Activated CD4-positive, alpha-beta T cell treated with anti-CD3 and anti-CD28 coated beads for 36 hours (primary cell): ENCODE measurements at regions of chr19 and their contacts with region 1.

Region 1: GRCh38 chr19:32748497-32748896 is 28.9 kb downstream of the TDRD12 start:
- DNase-seq: peak; percentile 18
- ATAC-seq: no peak
- H3K4me3 Mint-ChIP-seq: no peak overlapping the region
- H3K27ac Mint-ChIP-seq: no peak overlapping the region
- H3K4me1 Mint-ChIP-seq: peaks cover 10% of the 10 kb centered on the region
- H3K27me3 Mint-ChIP-seq: peaks cover 19% of the 10 kb centered on the region

Region 2: DNA sequence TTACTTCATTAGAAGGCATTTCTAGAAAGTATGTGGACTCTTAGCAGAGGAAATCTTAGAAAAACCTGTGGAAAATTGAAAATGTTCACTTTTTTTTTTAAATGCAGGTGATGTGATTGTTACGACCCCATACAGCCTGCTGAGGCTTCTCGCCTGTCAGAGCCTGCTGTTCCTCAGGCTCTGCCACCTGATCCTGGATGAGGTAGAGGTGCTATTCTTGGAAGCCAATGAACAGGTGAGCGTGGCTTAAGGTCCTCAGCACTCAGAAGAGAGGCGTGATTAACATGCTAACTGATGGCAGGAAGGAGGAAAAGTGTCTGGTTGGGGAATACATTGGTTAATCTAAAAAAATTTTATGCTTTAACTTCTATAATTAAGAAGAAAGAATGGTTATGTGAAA is 49.7 kb after region 1 on chr19:
- CTCF ChIA-PET with region 1: no interaction called
- POLR2A ChIA-PET with region 1: no interaction called
- intact Hi-C with region 1: loop called in 1 of 2 experiments (anchors 5 kb)
- DNase-seq: no peak
- ATAC-seq: no peak
- H3K4me3 Mint-ChIP-seq: no peak overlapping the region
- H3K27ac Mint-ChIP-seq: no peak overlapping the region
- H3K4me1 Mint-ChIP-seq: peaks cover 41% of the 10 kb centered on the region
- H3K27me3 Mint-ChIP-seq: no peaks in the 10 kb centered on the region

Region 3: DNA sequence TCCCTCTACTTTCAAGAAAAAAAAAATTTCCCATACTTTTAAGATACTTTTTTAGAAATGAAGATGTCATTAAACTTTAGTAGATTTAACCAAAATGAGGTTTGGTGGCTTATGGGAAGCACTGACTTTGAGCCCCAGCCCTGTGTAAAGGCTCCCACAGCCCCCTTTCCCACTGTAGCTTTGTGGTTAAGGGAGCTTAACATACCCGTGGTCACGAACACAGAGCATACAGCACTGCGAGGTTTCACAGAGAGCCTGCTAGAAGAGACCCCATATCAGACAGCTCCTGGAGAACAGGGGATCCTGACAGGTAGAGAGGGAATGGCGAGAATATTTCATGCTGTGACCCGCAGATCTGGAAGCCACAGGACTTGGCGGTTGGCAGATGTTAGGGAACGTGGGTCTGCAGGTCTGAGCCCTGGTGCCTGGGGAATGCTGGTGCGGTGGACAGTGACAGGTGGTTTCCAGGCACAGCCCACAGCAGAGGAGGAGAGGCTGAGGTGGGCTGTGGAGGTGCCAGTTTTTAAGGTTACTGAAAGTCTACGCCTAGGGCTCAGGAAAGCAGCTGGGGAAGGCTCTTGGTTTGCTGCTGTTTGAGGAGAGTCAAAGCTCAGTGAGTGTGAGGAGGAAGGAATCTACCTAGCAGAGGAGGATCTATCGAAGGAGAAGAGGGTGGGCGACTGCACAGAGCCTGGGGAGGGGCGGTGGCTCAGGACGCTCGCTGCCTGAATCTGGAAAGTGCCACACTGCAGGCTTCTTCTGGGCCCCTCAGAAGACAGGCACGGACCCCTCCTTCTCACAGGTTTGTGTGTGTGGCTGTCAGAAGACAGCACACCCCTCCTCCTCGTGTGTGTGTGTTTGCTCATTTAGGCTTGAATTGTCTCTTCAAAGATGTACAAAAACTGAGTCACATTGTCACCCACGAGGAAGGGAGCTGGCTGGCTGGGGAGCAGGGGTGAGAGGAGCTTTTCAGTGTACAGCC is 71.2 kb after region 1 on chr19:
- CTCF ChIA-PET with region 1: no interaction called
- POLR2A ChIA-PET with region 1: no interaction called
- intact Hi-C with region 1: no loop called
- DNase-seq: no peak
- ATAC-seq: no peak
- H3K4me3 Mint-ChIP-seq: no peak overlapping the region
- H3K27ac Mint-ChIP-seq: no peak overlapping the region
- H3K4me1 Mint-ChIP-seq: peaks cover 12% of the 10 kb centered on the region
- H3K27me3 Mint-ChIP-seq: peaks cover 11% of the 10 kb centered on the region

Region 4: GRCh38 chr19:33152178-33152577 is 403.7 kb after region 1 on chr19:
- CTCF ChIA-PET with region 1: no interaction called
- POLR2A ChIA-PET with region 1: no interaction called
- intact Hi-C with region 1: no loop called
- DNase-seq: no peak
- ATAC-seq: no peak
- H3K4me3 Mint-ChIP-seq: no peak overlapping the region
- H3K27ac Mint-ChIP-seq: no peak overlapping the region
- H3K4me1 Mint-ChIP-seq: no peaks in the 10 kb centered on the region
- H3K27me3 Mint-ChIP-seq: no peaks in the 10 kb centered on the region